ENCODE measurements at regions of chr1 and their contacts with region 1.

Region 1: DNA sequence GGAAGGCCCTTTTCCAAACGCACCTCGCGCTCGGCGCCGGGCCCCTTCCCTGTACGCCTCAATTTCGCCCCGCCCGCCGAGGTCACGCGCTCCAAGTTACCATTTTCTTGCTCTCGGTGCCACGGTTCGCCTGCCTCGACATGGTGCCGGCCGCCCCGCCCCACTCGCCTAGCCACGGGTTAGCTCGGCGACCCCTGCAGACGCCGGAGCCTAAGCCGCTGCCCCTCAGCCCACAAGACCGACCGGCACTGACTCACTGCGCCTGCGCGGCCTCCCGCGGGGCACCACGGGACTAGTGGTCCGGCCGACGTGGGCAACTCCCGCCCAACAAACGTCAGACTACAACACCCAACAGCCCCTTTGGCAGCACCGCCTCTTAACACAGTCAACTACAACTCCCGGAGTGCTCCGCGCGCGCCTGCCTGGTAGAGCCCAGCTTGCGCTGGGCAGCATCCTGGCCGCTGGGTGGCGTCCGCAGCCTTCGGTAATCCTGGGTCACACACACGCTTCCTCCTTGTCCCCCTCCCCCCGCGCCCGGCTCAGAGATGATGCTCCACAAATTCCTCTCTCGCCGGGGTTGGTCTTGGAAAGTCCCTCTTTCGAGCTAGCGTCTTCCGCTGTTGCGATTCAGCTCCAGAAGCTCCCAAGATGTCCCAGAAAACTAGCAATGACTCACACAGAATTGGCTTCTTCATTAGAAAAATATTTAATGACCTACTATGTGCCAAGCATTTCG is at the start of gene TRAPPC3:
- DNase-seq: peak; percentile 96
- ATAC-seq: peak; percentile 90
- H3K4me3 ChIP-seq: peak within 1 kb of the TSS; percentile 86
- H3K27ac ChIP-seq: peak within 1 kb of the TSS; percentile 77
- H3K4me1 ChIP-seq: peaks cover 30% of the 10 kb centered on the region
- H3K27me3 ChIP-seq: no peaks in the 10 kb centered on the region
- CTCF ChIP-seq: peak; percentile 94 to 100 (median 99); a peak in 5 of 6 replicates
- EP300 ChIP-seq: peak in 1 of 2 experiments; percentile 73; a peak in 1 of 4 replicates
- POLR2A ChIP-seq: peak; percentile 92
- RAD21 ChIP-seq: peak; percentile 93
- polyA plus RNA-seq, gene TRAPPC3: 14.7 to 24.5 TPM

Region 2: DNA sequence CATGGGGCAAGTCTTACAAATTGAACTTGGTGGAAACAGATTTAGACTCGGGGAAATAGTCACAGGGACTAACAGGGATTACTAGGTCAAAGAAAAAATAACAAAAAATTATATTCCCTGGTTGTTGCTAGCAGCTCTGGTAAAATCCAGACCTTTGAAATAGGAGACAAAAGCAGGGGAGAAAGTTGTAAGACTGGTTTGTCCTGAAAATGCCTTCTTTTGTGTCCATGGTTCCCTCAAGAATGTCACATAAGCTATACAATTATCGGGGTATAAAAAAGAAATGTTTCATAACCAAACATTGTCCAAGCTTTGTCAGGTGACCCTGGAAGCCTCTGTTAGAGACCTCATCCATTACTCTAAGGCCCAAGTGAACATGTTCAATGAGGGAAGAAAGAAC is 625.3 kb before region 1 on chr1:
- CTCF ChIA-PET with region 1: no interaction called
- POLR2A ChIA-PET with region 1: no interaction called
- RAD21 ChIA-PET with region 1: no interaction called
- SMC1A ChIA-PET with region 1: no interaction called
- in situ Hi-C with region 1: no loop called
- intact Hi-C with region 1: no loop called
- DNase-seq: no peak
- ATAC-seq: no peak
- H3K4me3 ChIP-seq: no peak overlapping the region
- H3K27ac ChIP-seq: no peak overlapping the region
- H3K4me1 ChIP-seq: no peaks in the 10 kb centered on the region
- H3K27me3 ChIP-seq: no peaks in the 10 kb centered on the region
- CTCF ChIP-seq: no peak
- EP300 ChIP-seq: no peak
- POLR2A ChIP-seq: no peak
- RAD21 ChIP-seq: no peak

Region 3: GRCh38 chr1:35851132-35851869 is 298.1 kb before region 1 on chr1:
- CTCF ChIA-PET with region 1: no interaction called
- POLR2A ChIA-PET with region 1: no interaction called
- RAD21 ChIA-PET with region 1: no interaction called
- SMC1A ChIA-PET with region 1: no interaction called
- in situ Hi-C with region 1: no loop called
- intact Hi-C with region 1: no loop called
- DNase-seq: no peak
- ATAC-seq: no peak
- H3K4me3 ChIP-seq: no peak overlapping the region
- H3K27ac ChIP-seq: no peak overlapping the region
- H3K4me1 ChIP-seq: no peaks in the 10 kb centered on the region
- H3K27me3 ChIP-seq: no peaks in the 10 kb centered on the region
- CTCF ChIP-seq: no peak
- EP300 ChIP-seq: no peak
- POLR2A ChIP-seq: no peak
- RAD21 ChIP-seq: no peak

Region 4: GRCh38 chr1:36099681-36100341 is 49.6 kb before region 1 on chr1:
- CTCF ChIA-PET with region 1: interaction called, 14 read pairs
- POLR2A ChIA-PET with region 1: no interaction called
- RAD21 ChIA-PET with region 1: interaction called, 4 read pairs
- SMC1A ChIA-PET with region 1: interaction called, 8 read pairs
- in situ Hi-C with region 1: no loop called
- intact Hi-C with region 1: no loop called
- DNase-seq: no peak
- ATAC-seq: peak; percentile 96
- H3K4me3 ChIP-seq: no peak overlapping the region
- H3K27ac ChIP-seq: no peak overlapping the region
- H3K4me1 ChIP-seq: no peaks in the 10 kb centered on the region
- H3K27me3 ChIP-seq: no peaks in the 10 kb centered on the region
- CTCF ChIP-seq: peak; percentile 82 to 88 (median 86)
- EP300 ChIP-seq: no peak
- POLR2A ChIP-seq: no peak
- RAD21 ChIP-seq: peak; percentile 95

Region 5: DNA sequence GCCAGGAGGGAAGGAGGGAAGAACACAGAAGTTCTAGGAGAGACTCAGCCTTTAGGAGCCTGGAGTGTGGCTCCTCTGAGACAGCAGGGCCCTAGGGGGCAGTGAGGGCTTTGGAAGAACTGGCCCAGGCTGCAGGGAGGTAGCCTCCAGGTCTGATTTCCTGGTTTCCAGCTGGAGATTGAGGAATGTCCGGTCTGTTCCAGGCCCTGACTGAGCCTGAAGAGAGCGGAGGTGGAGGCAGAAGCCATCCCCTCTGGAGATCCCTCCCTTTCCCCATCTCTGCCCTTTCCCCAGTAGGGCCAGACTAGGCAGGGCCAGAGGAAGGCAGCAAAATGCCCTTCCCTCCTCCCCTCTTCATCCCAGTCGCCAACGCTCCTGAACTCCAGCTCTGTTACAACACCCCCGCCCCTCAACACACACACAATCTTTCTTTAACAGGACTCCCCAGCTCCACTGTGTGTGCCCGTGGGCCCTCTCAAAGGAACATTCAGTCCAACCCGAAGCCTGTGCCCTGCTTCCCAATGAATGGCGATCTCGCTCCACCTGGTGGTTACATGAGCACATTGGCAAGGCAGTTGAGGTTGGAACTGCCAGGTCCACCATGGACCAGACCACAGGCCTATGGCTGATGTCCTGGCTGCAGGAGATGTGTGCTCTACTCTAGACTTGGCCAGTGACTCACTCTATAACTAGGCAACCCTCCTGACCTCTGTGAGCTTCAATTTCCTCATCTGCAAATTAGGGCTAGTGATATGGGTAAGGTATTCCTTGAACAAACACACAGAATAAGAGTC is 38.6 kb after region 1 on chr1:
- CTCF ChIA-PET with region 1: interaction called, 262 read pairs
- POLR2A ChIA-PET with region 1: interaction called, 49 read pairs
- RAD21 ChIA-PET with region 1: interaction called, 147 read pairs
- SMC1A ChIA-PET with region 1: interaction called, 126 read pairs
- in situ Hi-C with region 1: no loop called
- intact Hi-C with region 1: loop called (anchors 1 kb)
- DNase-seq: peak; percentile 57
- ATAC-seq: peak; percentile 100
- H3K4me3 ChIP-seq: no peak overlapping the region
- H3K27ac ChIP-seq: no peak overlapping the region
- H3K4me1 ChIP-seq: peaks cover 4% of the 10 kb centered on the region; the same call in 1 of the 2 replicates
- H3K27me3 ChIP-seq: no peaks in the 10 kb centered on the region
- CTCF ChIP-seq: peak; percentile 88 to 99 (median 93); a peak in 5 of 6 replicates
- EP300 ChIP-seq: no peak
- POLR2A ChIP-seq: no peak
- RAD21 ChIP-seq: peak; percentile 98

Region 6: DNA sequence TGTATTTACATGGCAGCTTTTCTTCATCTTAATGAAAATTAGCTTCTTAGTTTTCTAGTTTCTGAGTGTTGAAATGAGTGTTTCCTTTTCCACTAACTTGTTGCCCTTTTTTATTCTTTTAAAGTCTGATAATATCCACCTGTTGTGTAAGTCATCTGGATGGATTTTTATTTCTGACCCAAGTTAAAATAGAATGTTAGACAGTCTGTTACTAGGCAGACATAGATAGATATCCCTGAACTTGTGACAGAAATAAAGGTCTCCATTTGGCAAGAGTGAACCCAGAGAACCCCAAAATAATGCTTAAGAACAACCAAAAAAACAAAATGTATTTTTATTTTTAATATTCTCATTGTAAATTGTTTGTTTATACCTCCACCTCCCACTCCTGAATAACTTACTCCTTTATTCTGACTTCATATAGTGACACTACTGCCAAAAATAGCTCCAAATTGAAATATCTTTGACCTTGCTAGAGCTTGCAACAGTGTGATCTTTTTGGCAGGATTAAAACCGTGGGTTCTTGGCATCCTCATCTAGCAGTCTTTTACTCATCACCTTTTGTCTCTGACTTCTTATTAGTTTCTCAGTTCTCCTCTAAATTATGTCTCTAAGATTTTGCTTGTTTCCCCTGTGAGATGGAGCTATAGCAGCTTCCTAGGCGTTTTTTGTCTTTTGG is 129.8 kb after region 1 on chr1:
- CTCF ChIA-PET with region 1: interaction called, 18 read pairs
- POLR2A ChIA-PET with region 1: no interaction called
- RAD21 ChIA-PET with region 1: interaction called, 16 read pairs
- SMC1A ChIA-PET with region 1: interaction called, 40 read pairs
- in situ Hi-C with region 1: no loop called
- intact Hi-C with region 1: no loop called
- DNase-seq: no peak
- ATAC-seq: no peak
- H3K4me3 ChIP-seq: no peak overlapping the region
- H3K27ac ChIP-seq: peak overlapping the region; percentile 18
- H3K4me1 ChIP-seq: no peaks in the 10 kb centered on the region
- H3K27me3 ChIP-seq: no peaks in the 10 kb centered on the region
- CTCF ChIP-seq: no peak
- EP300 ChIP-seq: no peak
- POLR2A ChIP-seq: no peak
- RAD21 ChIP-seq: no peak

Region 7: GRCh38 chr1:36306902-36307456 is 157.6 kb after region 1 on chr1:
- CTCF ChIA-PET with region 1: interaction called, 13 read pairs
- POLR2A ChIA-PET with region 1: interaction called, 4 read pairs
- RAD21 ChIA-PET with region 1: interaction called, 15 read pairs
- SMC1A ChIA-PET with region 1: interaction called, 12 read pairs
- in situ Hi-C with region 1: no loop called
- intact Hi-C with region 1: no loop called
- DNase-seq: peak; percentile 80
- ATAC-seq: peak; percentile 99
- H3K4me3 ChIP-seq: peak overlapping the region; percentile 95
- H3K27ac ChIP-seq: peak overlapping the region; percentile 46
- H3K4me1 ChIP-seq: peaks cover 27% of the 10 kb centered on the region
- H3K27me3 ChIP-seq: no peaks in the 10 kb centered on the region
- CTCF ChIP-seq: no peak
- EP300 ChIP-seq: no peak
- POLR2A ChIP-seq: peak; percentile 98
- RAD21 ChIP-seq: no peak

Region 8: DNA sequence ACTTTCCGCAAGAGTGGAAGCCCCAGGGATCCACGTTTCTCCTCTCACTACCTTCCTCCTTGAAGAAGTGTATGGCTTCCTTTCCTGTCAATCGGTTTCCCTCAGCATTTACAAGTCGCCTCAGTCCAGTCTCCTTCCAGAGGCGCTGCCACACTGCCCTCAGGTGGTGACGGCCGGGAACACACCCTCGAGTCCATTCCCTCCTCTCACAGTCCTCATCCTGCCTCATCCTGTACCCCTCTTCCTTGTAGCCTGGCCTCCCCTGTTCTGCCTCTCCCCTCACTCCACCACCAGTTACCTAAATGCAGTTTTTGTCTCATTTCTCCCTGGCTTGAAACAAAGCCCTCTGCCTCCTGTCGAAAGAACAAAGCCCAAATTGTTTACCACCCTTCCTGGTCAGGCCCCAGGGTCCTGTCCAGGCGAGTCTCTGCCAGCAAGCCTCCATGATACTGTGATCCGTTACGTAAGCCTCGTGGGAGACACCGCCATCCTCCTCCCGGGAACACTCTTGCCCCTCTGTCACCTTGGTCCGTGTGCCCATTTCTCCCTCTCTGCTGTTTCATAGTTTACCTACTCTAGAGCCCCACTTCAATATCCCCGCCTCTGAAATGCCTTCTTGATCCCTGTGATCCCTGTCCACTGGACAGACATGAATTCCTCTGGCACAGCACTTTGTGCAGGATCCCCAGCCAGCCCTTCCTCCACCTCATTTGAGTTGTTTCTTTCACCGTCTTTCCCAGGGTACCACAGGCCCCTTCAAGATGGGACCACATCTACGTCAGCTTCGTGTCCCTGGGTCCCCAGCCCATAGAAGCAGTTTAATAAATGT is 271.6 kb after region 1 on chr1:
- CTCF ChIA-PET with region 1: interaction called, 18 read pairs
- POLR2A ChIA-PET with region 1: no interaction called
- RAD21 ChIA-PET with region 1: interaction called, 11 read pairs
- SMC1A ChIA-PET with region 1: interaction called, 13 read pairs
- in situ Hi-C with region 1: no loop called
- intact Hi-C with region 1: loop called (anchors 2 kb)
- DNase-seq: peak; percentile 74
- ATAC-seq: peak; percentile 100
- H3K4me3 ChIP-seq: no peak overlapping the region
- H3K27ac ChIP-seq: peak overlapping the region; percentile 31; the same call in 1 of the 2 replicates
- H3K4me1 ChIP-seq: peaks cover 6% of the 10 kb centered on the region; the same call in 1 of the 2 replicates
- H3K27me3 ChIP-seq: no peaks in the 10 kb centered on the region
- CTCF ChIP-seq: peak; percentile 95 to 98 (median 96); a peak in 5 of 6 replicates
- EP300 ChIP-seq: no peak
- POLR2A ChIP-seq: no peak
- RAD21 ChIP-seq: peak; percentile 97

Measured in GM12878 (cell line).